CD8-positive, alpha-beta T cell (primary cell): ENCODE measurements at regions of chr6 and their contacts with region 1.

Region 1: GRCh38 chr6:122399384-122400158 is at the start of gene HSF2:
- DNase-seq: peak; percentile 87 to 98 (median 92)
- ATAC-seq: peak; percentile 93
- H3K4me3 ChIP-seq: peak within 1 kb of the TSS; percentile 95 to 96
- H3K4me3 Mint-ChIP-seq: peak within 1 kb of the TSS; percentile 97
- H3K27ac ChIP-seq: peak within 1 kb of the TSS; percentile 84 to 86
- H3K27ac Mint-ChIP-seq: peak within 1 kb of the TSS; percentile 93
- H3K4me1 ChIP-seq: peaks cover 35% of the 10 kb centered on the region
- H3K4me1 Mint-ChIP-seq: peaks cover 41% of the 10 kb centered on the region
- H3K27me3 ChIP-seq: no peaks in the 10 kb centered on the region
- H3K27me3 Mint-ChIP-seq: no peaks in the 10 kb centered on the region
- CTCF ChIP-seq: no peak
- total RNA-seq, gene HSF2: 41.6 to 44.8 TPM

Region 2: DNA sequence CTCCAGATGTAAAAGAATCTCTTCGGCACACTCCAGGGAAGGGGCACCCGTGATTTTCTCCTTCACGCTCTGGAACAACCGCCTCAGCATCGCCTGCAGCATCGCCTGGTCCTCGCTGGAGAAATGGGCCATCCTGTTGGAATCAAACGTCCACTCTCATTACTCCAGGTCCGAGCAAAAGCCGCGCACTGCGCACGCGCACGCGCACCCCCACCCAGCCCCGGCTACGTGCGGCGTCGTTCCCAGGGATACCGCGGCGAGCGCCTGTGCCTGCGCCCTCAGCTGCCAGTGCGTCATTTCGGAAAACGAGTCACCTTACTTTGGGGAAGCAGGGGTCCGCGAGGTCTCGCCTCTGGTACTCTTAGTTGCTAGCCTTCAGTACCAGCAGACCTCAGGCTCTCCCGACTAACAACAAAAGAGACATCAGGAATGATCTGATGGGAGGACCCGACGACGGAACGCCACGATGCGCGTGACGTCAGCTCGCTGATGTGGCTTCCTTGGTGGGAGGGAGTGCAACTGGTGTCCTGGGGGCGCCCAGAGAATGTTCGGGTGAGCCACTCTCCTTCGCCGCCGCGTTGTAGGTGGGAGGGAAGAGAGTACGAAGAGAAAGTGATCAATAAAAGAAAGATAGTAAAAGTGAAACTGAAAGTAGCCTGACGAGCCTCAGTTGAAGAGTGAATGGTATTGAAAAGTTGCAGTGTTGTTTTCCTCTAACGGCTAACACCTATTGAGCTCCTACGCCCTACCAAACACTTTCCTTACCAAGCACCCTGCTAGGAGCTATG is 1065.1 kb before region 1 on chr6 and contains the start of gene TBC1D32:
- CTCF ChIA-PET with region 1: no interaction called
- POLR2A ChIA-PET with region 1: no interaction called
- intact Hi-C with region 1: loop called (anchors 1 to 10 kb)
- DNase-seq: peak; percentile 71 to 94 (median 86)
- ATAC-seq: peak; percentile 88
- H3K4me3 ChIP-seq: peak within 1 kb of the TSS; percentile 86 to 87
- H3K4me3 Mint-ChIP-seq: peak within 1 kb of the TSS; percentile 93
- H3K27ac ChIP-seq: peak within 1 kb of the TSS; percentile 99
- H3K27ac Mint-ChIP-seq: peak within 1 kb of the TSS; percentile 98
- H3K4me1 ChIP-seq: peaks cover 23% of the 10 kb centered on the region
- H3K4me1 Mint-ChIP-seq: peaks cover 35% of the 10 kb centered on the region
- H3K27me3 ChIP-seq: no peaks in the 10 kb centered on the region
- H3K27me3 Mint-ChIP-seq: no peaks in the 10 kb centered on the region
- CTCF ChIP-seq: no peak
- total RNA-seq, gene TBC1D32: 6.0 to 7.4 TPM

Region 3: GRCh38 chr6:122381497-122382265 is 17.9 kb before region 1 on chr6:
- CTCF ChIA-PET with region 1: interaction called, 5 read pairs
- POLR2A ChIA-PET with region 1: interaction called, 5 read pairs
- intact Hi-C with region 1: loop called (anchors 1 to 2 kb)
- DNase-seq: peak; percentile 27 to 84 (median 62)
- ATAC-seq: peak; percentile 100
- H3K4me3 ChIP-seq: no peak overlapping the region
- H3K4me3 Mint-ChIP-seq: no peak overlapping the region
- H3K27ac ChIP-seq: no peak overlapping the region
- H3K27ac Mint-ChIP-seq: no peak overlapping the region
- H3K4me1 ChIP-seq: no peaks in the 10 kb centered on the region
- H3K4me1 Mint-ChIP-seq: peaks cover 6% of the 10 kb centered on the region
- H3K27me3 ChIP-seq: no peaks in the 10 kb centered on the region
- H3K27me3 Mint-ChIP-seq: no peaks in the 10 kb centered on the region
- CTCF ChIP-seq: peak; percentile 81

Region 4: DNA sequence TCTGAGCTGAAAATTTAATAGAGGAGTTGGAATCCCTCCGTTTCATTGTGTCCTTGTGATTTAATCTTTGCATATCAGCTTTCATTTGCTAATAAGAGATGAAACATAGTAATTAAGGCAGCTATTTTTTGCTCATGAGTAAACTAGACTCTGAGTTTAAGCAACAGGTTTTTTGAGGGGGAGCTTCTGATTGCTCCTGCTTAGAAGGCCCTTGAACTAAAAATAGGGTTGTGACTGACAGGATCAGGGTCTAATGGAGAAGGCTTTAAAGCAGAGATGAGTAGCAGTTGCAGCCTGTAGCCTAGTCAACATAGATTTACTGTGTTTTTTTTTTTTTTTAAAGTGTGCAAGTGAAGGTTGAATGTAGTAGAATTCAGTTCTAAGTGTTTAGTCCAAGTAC is 17.3 kb after region 1 on chr6:
- CTCF ChIA-PET with region 1: interaction called, 9 read pairs
- POLR2A ChIA-PET with region 1: interaction called, 3 read pairs
- intact Hi-C with region 1: loop called in 1 of 2 experiments (anchors 2 kb)
- DNase-seq: no peak
- ATAC-seq: no peak
- H3K4me3 ChIP-seq: no peak overlapping the region
- H3K4me3 Mint-ChIP-seq: no peak overlapping the region
- H3K27ac ChIP-seq: no peak overlapping the region
- H3K27ac Mint-ChIP-seq: no peak overlapping the region
- H3K4me1 ChIP-seq: peaks cover 3% of the 10 kb centered on the region
- H3K4me1 Mint-ChIP-seq: peaks cover 12% of the 10 kb centered on the region
- H3K27me3 ChIP-seq: no peaks in the 10 kb centered on the region
- H3K27me3 Mint-ChIP-seq: no peaks in the 10 kb centered on the region
- CTCF ChIP-seq: no peak